Prostate gland (tissue), 2 donors: ENCODE measurements at regions of chr14 and their contacts with region 1.

Region 1: DNA sequence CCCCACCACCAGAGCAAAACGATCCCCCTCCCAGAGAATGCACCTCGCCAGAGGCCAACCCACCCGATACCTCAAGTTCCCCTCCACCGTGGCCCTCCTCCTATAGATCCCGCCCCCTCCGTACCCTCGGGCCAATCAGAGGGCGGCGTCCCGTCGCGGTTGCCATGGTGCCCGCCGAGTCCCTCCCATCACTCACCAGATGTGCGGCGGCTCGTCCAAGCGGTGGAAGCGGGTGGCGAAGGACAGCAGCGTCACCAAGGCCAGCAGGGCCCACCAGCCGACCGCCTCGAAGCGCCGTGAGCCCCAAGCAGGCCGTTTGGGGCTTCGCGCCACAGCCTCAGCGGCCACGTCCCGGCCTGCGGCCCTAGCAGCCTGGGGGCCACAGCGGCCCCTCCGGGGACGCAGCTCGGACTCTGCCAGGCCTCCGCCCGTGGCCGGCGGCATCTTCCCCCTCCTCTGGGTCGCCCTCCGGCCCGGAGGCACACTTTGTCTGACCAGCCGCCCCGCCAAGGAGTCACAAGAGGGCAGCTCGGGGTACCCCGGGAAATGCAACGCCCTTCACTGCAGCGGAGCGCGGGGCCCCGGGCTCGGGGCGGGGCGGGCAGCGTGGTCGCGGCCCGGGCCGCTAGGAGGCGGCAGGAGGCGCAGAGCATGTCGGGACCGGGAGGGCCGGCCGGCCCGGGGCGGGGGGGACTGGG is at the start of gene POMT2:
- DNase-seq: peak; percentile 93
- H3K4me3 ChIP-seq: peak within 1 kb of the TSS; percentile 87 to 93
- H3K27ac ChIP-seq: peak within 1 kb of the TSS; percentile 98 to 99
- H3K4me1 ChIP-seq: peaks cover 7% of the 10 kb centered on the region
- H3K27me3 ChIP-seq: no peaks in the 10 kb centered on the region
- CTCF ChIP-seq: peak; percentile 50 to 84 (median 64)
- POLR2A ChIP-seq: no peak
- total RNA-seq, gene POMT2: 8.4 to 101 TPM

Region 2: DNA sequence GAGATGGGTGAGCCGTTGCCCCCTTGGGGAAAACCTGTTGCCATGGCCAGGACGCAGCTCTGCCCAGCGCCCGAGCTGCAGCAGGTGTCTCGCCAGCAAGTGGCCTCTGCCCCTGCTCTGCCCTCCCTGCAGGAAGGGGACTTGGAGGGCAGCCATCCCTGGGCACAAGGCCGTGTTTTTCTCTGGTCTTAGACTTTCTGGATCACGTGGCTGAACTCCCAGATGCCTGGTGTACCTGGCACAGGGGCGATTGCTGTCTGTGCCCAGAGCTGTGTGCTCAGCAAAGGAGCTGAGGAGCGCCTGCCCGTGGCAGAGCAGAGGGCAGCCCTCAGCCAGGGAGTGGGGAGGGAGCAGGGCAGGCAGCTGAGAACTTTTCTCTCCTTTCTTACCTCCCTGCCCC is 100.8 kb before region 1 on chr14:
- intact Hi-C with region 1: no loop called
- DNase-seq: no peak
- H3K4me3 ChIP-seq: no peak overlapping the region
- H3K27ac ChIP-seq: no peak overlapping the region
- H3K4me1 ChIP-seq: no peaks in the 10 kb centered on the region
- H3K27me3 ChIP-seq: no peaks in the 10 kb centered on the region
- CTCF ChIP-seq: no peak
- POLR2A ChIP-seq: no peak

Region 3: GRCh38 chr14:77376771-77377501 is 56.5 kb after region 1 on chr14 and contains the starts of genes SAMD15 and TMED8:
- intact Hi-C with region 1: loop called (anchors 2 kb)
- DNase-seq: peak; percentile 74
- H3K4me3 ChIP-seq: peak within 1 kb of the TSS; percentile 73
- H3K27ac ChIP-seq: peak within 1 kb of the TSS; percentile 84 to 85
- H3K4me1 ChIP-seq: peaks cover 2% of the 10 kb centered on the region
- H3K27me3 ChIP-seq: no peaks in the 10 kb centered on the region
- CTCF ChIP-seq: peak in 2 of 4 experiments; percentile 43 to 48
- POLR2A ChIP-seq: peak; percentile 31
- total RNA-seq, gene SAMD15: 0.96 to 2.9 TPM
- total RNA-seq, gene TMED8: 14.7 to 35.2 TPM